ENCODE measurements at regions of chr7 and their contacts with region 1.

Region 1: DNA sequence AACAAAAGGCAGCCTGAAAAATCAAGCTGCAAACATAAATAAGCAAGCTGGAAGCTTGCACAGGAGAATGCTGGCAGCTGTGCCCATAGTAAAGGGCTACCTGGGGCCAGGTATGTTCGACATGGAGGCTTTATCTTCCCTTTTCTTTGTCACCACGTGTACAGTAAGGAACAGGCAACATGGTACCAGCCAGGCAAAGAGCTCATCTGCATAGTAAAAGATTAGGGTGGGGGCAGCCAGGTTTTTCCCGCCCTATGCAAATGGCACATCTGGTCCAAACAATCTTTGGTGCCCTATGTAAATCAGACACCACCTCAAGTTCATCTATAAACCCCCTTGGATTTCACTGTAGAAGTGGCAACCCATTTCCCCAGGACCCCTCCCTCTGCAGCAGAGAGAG is 625.1 kb downstream of the TYW1 start:
- DNase-seq: no peak
- ATAC-seq: no peak
- H3K4me3 ChIP-seq: no peak overlapping the region
- H3K4me3 Mint-ChIP-seq: no peak overlapping the region
- H3K27ac ChIP-seq: no peak overlapping the region
- H3K27ac Mint-ChIP-seq: no peak overlapping the region
- H3K4me1 ChIP-seq: no peaks in the 10 kb centered on the region
- H3K4me1 Mint-ChIP-seq: peaks cover 2% of the 10 kb centered on the region
- H3K27me3 ChIP-seq: no peaks in the 10 kb centered on the region
- H3K27me3 Mint-ChIP-seq: peaks cover 4% of the 10 kb centered on the region
- CTCF ChIP-seq: no peak

Region 2: DNA sequence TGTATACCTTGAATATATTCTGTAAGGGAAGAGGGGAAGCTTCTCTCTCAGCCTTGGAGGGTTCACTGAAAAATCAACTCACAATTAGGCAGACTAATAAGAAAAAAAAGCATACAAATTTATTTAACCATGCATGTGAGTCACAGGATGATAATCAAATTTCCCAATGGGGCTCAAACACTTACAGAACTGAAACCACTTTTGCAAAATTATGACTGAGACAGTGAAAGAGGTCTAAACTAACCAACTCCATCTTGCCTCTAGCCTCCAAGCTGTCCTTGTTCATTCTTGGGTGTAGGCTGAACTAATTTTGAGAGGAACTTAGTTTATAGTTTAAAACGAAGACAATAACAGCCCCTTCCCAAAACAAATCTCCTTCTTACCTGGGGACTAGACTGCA is 1358.3 kb after region 1 on chr7:
- CTCF ChIA-PET with region 1: no interaction called
- POLR2A ChIA-PET with region 1: no interaction called
- intact Hi-C with region 1: loop called in 1 of 2 experiments (anchors 5 kb)
- DNase-seq: no peak
- ATAC-seq: no peak
- H3K4me3 ChIP-seq: no peak overlapping the region
- H3K4me3 Mint-ChIP-seq: no peak overlapping the region
- H3K27ac ChIP-seq: no peak overlapping the region
- H3K27ac Mint-ChIP-seq: no peak overlapping the region
- H3K4me1 ChIP-seq: no peaks in the 10 kb centered on the region
- H3K4me1 Mint-ChIP-seq: no peaks in the 10 kb centered on the region
- H3K27me3 ChIP-seq: no peaks in the 10 kb centered on the region
- H3K27me3 Mint-ChIP-seq: no peaks in the 10 kb centered on the region
- CTCF ChIP-seq: no peak